CD4-positive, alpha-beta memory T cell (primary cell): ENCODE measurements at regions of chr2 and their contacts with region 1.

Region 1: DNA sequence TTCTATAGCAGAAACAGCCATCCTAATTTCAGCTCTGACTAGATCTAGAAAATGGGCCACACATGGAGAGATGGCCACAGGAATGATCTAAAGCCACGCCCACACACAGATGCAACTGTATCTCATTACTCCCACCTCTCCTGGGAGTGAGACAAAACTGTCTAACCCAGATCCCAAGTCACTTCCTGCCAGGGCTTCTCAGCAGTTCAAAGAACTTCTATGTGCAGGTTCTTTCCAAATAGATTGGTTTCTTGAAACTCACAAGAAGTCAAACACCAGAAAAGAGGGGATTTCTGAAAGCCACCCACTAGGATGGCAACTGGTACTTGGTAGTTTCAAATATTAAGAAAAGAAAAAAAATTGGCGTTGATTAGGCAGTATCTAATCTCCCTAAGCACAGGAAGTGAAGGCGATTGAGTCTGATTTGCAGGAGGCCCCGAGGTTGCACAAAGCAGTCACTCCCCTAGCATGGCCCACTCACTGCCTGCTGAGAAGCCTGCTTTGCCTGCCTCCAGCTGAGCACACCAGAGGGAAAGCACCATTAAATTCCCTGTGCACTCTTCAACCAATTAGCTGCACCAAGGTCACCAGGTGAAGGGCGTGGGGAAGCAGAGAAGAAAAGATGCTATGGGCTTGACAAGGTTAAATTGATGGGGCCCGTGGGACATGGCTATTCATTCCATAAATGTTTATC is 51.1 kb downstream of the PAPOLG start:
- DNase-seq: peak; percentile 37 to 74 (median 41)
- H3K4me3 ChIP-seq: no peak overlapping the region
- H3K4me3 Mint-ChIP-seq: peak overlapping the region in 7 of 8 donors; percentile 29 to 75 (median 69)
- H3K27ac ChIP-seq: peak overlapping the region; percentile 51
- H3K27ac Mint-ChIP-seq: peak overlapping the region; percentile 86 to 97 (median 93)
- H3K4me1 ChIP-seq: peaks cover 49% of the 10 kb centered on the region
- H3K4me1 Mint-ChIP-seq: peaks cover 30 to 60% (median 48%) of the 10 kb centered on the region in 4 donors
- H3K27me3 ChIP-seq: no peaks in the 10 kb centered on the region
- H3K27me3 Mint-ChIP-seq: no peaks in the 10 kb centered on the region

Region 2: GRCh38 chr2:59732871-59733566 is 1074.1 kb before region 1 on chr2:
- CTCF ChIA-PET with region 1: no interaction called
- POLR2A ChIA-PET with region 1: no interaction called
- intact Hi-C with region 1: no loop called
- DNase-seq: no peak
- H3K4me3 ChIP-seq: no peak overlapping the region
- H3K4me3 Mint-ChIP-seq: no peak overlapping the region
- H3K27ac ChIP-seq: no peak overlapping the region
- H3K27ac Mint-ChIP-seq: no peak overlapping the region
- H3K4me1 ChIP-seq: no peaks in the 10 kb centered on the region
- H3K4me1 Mint-ChIP-seq: no peaks in the 10 kb centered on the region
- H3K27me3 ChIP-seq: no peaks in the 10 kb centered on the region
- H3K27me3 Mint-ChIP-seq: no peaks in the 10 kb centered on the region

Region 3: GRCh38 chr2:60366135-60366712 is 440.9 kb before region 1 on chr2:
- CTCF ChIA-PET with region 1: no interaction called
- POLR2A ChIA-PET with region 1: no interaction called
- intact Hi-C with region 1: no loop called
- DNase-seq: no peak
- H3K4me3 ChIP-seq: no peak overlapping the region
- H3K4me3 Mint-ChIP-seq: no peak overlapping the region
- H3K27ac ChIP-seq: no peak overlapping the region
- H3K27ac Mint-ChIP-seq: no peak overlapping the region
- H3K4me1 ChIP-seq: no peaks in the 10 kb centered on the region
- H3K4me1 Mint-ChIP-seq: peaks cover 0 to 2% (median 0%) of the 10 kb centered on the region in 4 donors
- H3K27me3 ChIP-seq: no peaks in the 10 kb centered on the region
- H3K27me3 Mint-ChIP-seq: peaks cover 3% of the 10 kb centered on the region in 2 donors

Region 4: GRCh38 chr2:60707750-60708371 is 99.3 kb before region 1 on chr2:
- CTCF ChIA-PET with region 1: interaction called, 3 read pairs
- POLR2A ChIA-PET with region 1: no interaction called
- intact Hi-C with region 1: loop called (anchors 5 kb)
- DNase-seq: peak in 4 of 5 donors; percentile 31 to 39 (median 32)
- H3K4me3 ChIP-seq: no peak overlapping the region
- H3K4me3 Mint-ChIP-seq: no peak overlapping the region
- H3K27ac ChIP-seq: no peak overlapping the region
- H3K27ac Mint-ChIP-seq: no peak overlapping the region
- H3K4me1 ChIP-seq: no peaks in the 10 kb centered on the region
- H3K4me1 Mint-ChIP-seq: no peaks in the 10 kb centered on the region
- H3K27me3 ChIP-seq: no peaks in the 10 kb centered on the region
- H3K27me3 Mint-ChIP-seq: peaks cover 6 to 12% of the 10 kb centered on the region in 2 donors

Region 5: DNA sequence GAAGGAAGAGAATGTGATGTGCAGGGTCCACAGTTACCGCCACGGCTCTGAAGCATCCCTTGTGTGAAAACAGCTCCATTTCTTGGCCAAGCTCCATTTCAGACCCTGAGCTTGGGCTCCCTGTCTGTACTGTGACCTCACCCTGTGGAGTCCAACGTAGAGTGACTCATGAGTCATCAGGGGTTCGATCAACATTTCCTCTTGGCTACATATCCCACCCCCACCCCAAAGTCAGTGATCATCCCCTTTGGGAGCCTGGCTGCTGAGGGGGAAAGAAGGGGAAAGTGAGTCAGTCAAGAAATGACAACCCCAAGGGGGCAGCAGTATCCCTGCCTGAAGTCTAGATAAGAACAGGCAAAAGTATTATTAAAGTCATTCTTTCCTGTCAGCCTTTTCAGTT is 11.1 kb after region 1 on chr2:
- CTCF ChIA-PET with region 1: interaction called, 10 read pairs
- POLR2A ChIA-PET with region 1: interaction called, 42 read pairs
- intact Hi-C with region 1: loop called (anchors 1 kb)
- DNase-seq: peak in 1 of 5 donors; percentile 73
- H3K4me3 ChIP-seq: no peak overlapping the region
- H3K4me3 Mint-ChIP-seq: peak overlapping the region in 5 of 8 donors; percentile 11 to 78 (median 53)
- H3K27ac ChIP-seq: no peak overlapping the region
- H3K27ac Mint-ChIP-seq: peak overlapping the region; percentile 90 to 98 (median 97)
- H3K4me1 ChIP-seq: peaks cover 35% of the 10 kb centered on the region
- H3K4me1 Mint-ChIP-seq: peaks cover 25 to 56% (median 40%) of the 10 kb centered on the region in 4 donors
- H3K27me3 ChIP-seq: no peaks in the 10 kb centered on the region
- H3K27me3 Mint-ChIP-seq: peaks cover 0 to 5% of the 10 kb centered on the region in 2 donors

Region 6: GRCh38 chr2:60992985-60993392 is 185.9 kb after region 1 on chr2:
- CTCF ChIA-PET with region 1: interaction called, 91 read pairs
- POLR2A ChIA-PET with region 1: no interaction called
- intact Hi-C with region 1: no loop called
- DNase-seq: peak in 4 of 5 donors; percentile 46 to 61 (median 52)
- H3K4me3 ChIP-seq: peak overlapping the region; percentile 1 to 44
- H3K4me3 Mint-ChIP-seq: peak overlapping the region; percentile 71 to 80 (median 78)
- H3K27ac ChIP-seq: no peak overlapping the region
- H3K27ac Mint-ChIP-seq: peak overlapping the region; percentile 62 to 97 (median 95)
- H3K4me1 ChIP-seq: peaks cover 7% of the 10 kb centered on the region
- H3K4me1 Mint-ChIP-seq: peaks cover 4 to 12% (median 9%) of the 10 kb centered on the region in 4 donors
- H3K27me3 ChIP-seq: no peaks in the 10 kb centered on the region
- H3K27me3 Mint-ChIP-seq: no peaks in the 10 kb centered on the region

Region 7: DNA sequence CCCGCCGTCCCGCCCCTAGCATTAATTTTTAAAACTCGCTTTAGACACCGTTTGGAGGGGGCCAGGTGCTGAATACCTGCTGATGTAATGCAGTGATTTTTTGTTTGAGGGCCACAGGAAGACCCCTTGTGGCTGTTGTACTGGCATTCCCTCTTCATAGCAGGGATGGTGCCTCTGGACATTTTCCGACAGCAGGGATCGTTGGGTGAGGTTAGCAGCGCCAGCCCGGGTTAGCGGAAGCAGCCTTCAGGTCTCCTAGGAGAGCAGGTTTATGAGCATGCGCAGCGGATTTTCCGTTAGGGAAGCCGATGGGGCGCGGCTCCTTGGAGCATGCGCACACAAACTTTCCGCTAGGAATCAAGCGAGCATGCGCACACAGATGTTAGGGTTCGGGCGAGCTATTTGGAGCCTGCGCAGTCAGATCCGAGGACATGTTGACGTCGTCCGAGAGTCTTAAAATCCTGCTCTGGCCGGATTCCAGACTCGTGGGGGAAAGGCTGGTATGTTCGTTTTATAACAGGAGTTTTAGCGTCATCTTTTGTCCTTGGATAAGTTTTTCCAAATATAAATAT is 337.6 kb after region 1 on chr2:
- CTCF ChIA-PET with region 1: no interaction called
- POLR2A ChIA-PET with region 1: no interaction called
- intact Hi-C with region 1: loop called (anchors 5 kb)
- DNase-seq: peak; percentile 88 to 90 (median 90)
- H3K4me3 ChIP-seq: peak overlapping the region; percentile 85 to 90
- H3K4me3 Mint-ChIP-seq: peak overlapping the region; percentile 91 to 97 (median 95)
- H3K27ac ChIP-seq: peak overlapping the region; percentile 55
- H3K27ac Mint-ChIP-seq: peak overlapping the region; percentile 86 to 98 (median 97)
- H3K4me1 ChIP-seq: peaks cover 10% of the 10 kb centered on the region
- H3K4me1 Mint-ChIP-seq: peaks cover 6 to 11% (median 9%) of the 10 kb centered on the region in 4 donors
- H3K27me3 ChIP-seq: no peaks in the 10 kb centered on the region
- H3K27me3 Mint-ChIP-seq: no peaks in the 10 kb centered on the region